HCT116 (cell line): ENCODE measurements at regions of chr17 and their contacts with region 1.

Region 1: GRCh38 chr17:74379495-74380085 is 12.3 kb downstream of the GPR142 start:
- DNase-seq: peak; percentile 69
- ATAC-seq: peak; percentile 92
- H3K4me3 ChIP-seq: peak overlapping the region; percentile 6 to 45; a peak in 3 of 4 replicates
- H3K27ac ChIP-seq: peak overlapping the region; percentile 43; the same call in 1 of the 2 replicates
- H3K4me1 ChIP-seq: peaks cover 19 to 26% of the 10 kb centered on the region in 2 experiments
- H3K27me3 ChIP-seq: peaks cover 13% of the 10 kb centered on the region; the same call in 1 of the 2 replicates
- CTCF ChIP-seq: peak; percentile 93 to 98 (median 98)
- POLR2A ChIP-seq: no peak
- RAD21 ChIP-seq: peak; percentile 100

Region 2: DNA sequence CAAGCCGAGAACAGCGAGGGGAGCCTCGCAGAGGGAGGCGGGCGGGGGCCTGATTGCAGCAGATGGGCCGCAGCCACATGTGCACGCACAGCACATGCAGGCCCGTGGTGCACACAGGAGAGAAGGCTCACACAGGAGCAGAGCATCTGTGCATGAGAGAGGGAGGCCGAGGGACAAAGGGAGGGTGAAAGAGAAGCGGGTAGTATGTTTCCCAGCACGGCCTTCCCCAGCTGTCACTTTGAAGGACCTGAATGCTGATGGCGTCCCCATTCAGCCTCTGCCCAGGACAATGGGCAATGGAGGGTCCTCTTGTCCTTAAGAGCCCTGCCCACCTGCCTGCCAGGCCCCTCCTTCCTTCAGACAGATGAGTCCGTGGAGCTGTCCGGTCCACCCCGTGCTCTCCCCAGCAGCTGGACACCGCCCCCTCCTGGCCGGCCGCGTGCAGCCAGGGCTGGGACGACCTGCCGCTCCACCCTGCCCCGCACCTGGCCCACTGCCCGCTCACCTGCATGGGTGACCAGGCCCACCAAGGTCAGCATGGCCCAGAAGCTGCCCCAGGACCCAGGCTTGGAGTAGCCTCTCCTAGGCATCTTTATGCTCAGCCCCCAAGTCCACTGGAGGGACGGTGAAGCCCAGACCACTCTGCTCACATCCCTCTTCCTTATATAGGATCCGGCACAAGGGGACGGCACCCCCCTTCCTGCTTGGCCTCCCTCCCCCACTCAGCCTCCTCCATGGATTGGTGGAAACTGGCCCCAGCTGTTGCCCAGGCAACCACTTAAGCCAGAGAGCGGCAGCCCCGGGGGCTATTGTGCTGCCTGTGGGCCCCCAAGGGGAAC is 18.1 kb before region 1 on chr17 and contains the start of gene BTBD17:
- CTCF ChIA-PET with region 1: interaction called, 32 read pairs
- POLR2A ChIA-PET with region 1: no interaction called
- RAD21 ChIA-PET with region 1: no interaction called
- intact Hi-C with region 1: no loop called
- DNase-seq: no peak
- ATAC-seq: peak; percentile 96
- H3K4me3 ChIP-seq: no peak within 1 kb of the TSS
- H3K27ac ChIP-seq: no peak within 1 kb of the TSS; the same call in 1 of the 2 replicates
- H3K4me1 ChIP-seq: peaks cover 0 to 8% of the 10 kb centered on the region in 2 experiments; a peak in 1 of 4 replicates
- H3K27me3 ChIP-seq: no peaks in the 10 kb centered on the region
- CTCF ChIP-seq: peak; percentile 86 to 98 (median 98)
- POLR2A ChIP-seq: no peak
- RAD21 ChIP-seq: peak; percentile 80
- total RNA-seq, gene BTBD17: not detected

Region 3: GRCh38 chr17:74368092-74369081 is 11.2 kb before region 1 on chr17:
- CTCF ChIA-PET with region 1: interaction called, 91 read pairs
- POLR2A ChIA-PET with region 1: interaction called, 3 read pairs
- RAD21 ChIA-PET with region 1: interaction called, 10 to 13 read pairs
- intact Hi-C with region 1: no loop called
- DNase-seq: peak; percentile 67
- ATAC-seq: peak; percentile 95
- H3K4me3 ChIP-seq: no peak overlapping the region
- H3K27ac ChIP-seq: no peak overlapping the region
- H3K4me1 ChIP-seq: peaks cover 2 to 13% of the 10 kb centered on the region in 2 experiments; a peak in 2 of 4 replicates
- H3K27me3 ChIP-seq: no peaks in the 10 kb centered on the region
- CTCF ChIP-seq: peak; percentile 96 to 100 (median 99)
- POLR2A ChIP-seq: no peak
- RAD21 ChIP-seq: peak; percentile 94

Region 4: DNA sequence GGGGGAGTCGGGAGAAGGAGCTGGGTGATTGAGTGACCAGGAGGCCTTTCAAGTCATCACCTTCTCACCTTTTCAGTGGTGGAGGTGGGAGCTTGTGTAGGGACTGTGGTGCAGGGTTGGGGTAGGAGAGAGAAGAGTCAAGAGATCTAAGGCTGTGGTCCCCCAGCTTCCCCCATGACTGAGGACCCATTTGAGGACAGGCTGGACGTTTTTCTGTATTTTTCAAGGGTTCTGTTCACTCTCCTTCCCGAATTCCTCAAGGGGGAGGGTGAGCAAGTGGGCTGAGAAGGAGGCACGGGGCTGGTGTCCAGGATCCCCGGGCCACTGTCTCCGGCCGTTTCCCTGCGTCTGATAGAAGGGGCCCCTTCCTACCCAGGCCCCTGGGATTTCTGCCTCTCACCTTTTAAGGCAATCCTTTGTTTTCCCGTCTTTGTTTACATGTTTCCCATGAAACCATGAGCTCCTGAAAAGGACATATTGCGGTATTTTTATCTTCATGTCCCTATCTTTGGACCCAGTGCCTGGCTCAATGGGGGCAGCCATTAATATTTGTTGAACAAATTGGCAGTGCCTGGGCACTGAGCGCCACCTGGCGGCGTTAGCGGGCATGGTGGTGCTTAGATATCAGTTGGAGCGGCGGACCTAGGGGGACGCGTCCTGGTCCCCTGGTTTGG is 77.7 kb after region 1 on chr17:
- CTCF ChIA-PET with region 1: interaction called, 114 read pairs
- POLR2A ChIA-PET with region 1: interaction called, 27 read pairs
- RAD21 ChIA-PET with region 1: interaction called, 32 to 61 read pairs
- intact Hi-C with region 1: loop called (anchors 1 kb)
- DNase-seq: peak; percentile 63
- ATAC-seq: peak; percentile 56
- H3K4me3 ChIP-seq: no peak overlapping the region
- H3K27ac ChIP-seq: no peak overlapping the region
- H3K4me1 ChIP-seq: peaks cover 22 to 29% of the 10 kb centered on the region in 2 experiments
- H3K27me3 ChIP-seq: no peaks in the 10 kb centered on the region
- CTCF ChIP-seq: peak; percentile 97 to 100 (median 99)
- POLR2A ChIP-seq: no peak
- RAD21 ChIP-seq: peak; percentile 100

Region 5: DNA sequence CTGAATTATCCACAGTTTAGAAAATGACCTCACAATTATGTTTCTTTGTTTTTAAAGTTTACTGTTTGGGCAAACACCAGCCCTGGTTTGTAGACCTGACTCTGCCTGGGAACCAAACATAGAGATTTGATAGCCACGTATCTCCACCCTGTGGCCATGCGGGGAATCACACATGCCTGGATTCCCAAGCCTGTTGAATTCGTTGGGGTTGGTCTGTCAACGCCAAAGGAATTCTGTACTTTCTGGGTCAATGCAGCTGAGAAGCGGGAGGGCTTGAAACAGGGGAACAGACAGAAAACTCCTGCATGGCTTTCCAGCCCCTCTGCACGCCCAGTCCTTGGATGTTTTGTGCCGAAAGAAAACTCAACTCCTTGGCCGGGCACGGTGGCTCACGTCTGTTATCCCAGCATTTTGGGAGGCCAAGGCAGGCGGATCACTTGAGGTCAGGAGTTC is 113.8 kb after region 1 on chr17:
- CTCF ChIA-PET with region 1: interaction called, 22 read pairs
- POLR2A ChIA-PET with region 1: no interaction called
- RAD21 ChIA-PET with region 1: interaction called in 1 of 2 experiments, 6 read pairs
- intact Hi-C with region 1: loop called (anchors 1 kb)
- DNase-seq: peak; percentile 73
- ATAC-seq: peak; percentile 98
- H3K4me3 ChIP-seq: no peak overlapping the region
- H3K27ac ChIP-seq: no peak overlapping the region
- H3K4me1 ChIP-seq: no peaks in the 10 kb centered on the region
- H3K27me3 ChIP-seq: no peaks in the 10 kb centered on the region
- CTCF ChIP-seq: peak; percentile 97 to 99 (median 97)
- POLR2A ChIP-seq: no peak
- RAD21 ChIP-seq: peak; percentile 97

Region 6: DNA sequence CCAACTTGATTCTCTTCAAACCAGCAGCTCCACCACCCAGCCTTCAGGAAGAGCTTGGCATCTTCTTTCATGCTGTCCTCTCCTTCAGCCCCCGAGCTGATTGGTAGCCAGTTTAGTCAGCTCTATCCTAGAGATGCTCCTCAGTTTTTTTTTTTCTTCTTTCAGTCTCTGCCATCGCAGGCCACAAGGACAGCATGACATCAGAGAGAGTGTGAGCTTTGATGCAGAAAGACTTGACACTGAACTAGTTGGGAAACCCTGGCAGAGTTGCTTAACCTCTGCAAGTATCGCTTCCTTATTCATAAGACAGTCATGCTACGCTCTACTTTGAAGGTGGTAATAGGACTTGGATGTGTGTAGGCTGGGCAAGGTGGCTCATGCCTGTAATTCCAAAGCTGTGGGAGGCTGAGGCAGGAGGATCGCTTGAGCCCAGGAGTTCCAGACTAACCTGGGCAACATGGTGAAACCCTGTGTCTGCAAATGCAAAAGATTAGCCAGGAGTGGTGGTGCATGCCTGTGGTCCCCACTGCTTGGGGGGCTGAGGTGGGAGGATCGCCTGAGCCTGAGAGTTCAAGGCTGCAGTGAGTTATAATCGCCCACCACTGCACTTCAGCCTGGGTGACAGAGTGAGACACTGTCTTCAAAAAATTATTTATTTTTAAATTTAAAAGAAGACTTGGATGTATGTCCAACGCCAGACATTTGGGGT is 149.1 kb after region 1 on chr17:
- CTCF ChIA-PET with region 1: interaction called, 43 read pairs
- POLR2A ChIA-PET with region 1: no interaction called
- RAD21 ChIA-PET with region 1: interaction called in 1 of 2 experiments, 3 read pairs
- intact Hi-C with region 1: loop called (anchors 1 kb)
- DNase-seq: no peak
- ATAC-seq: no peak
- H3K4me3 ChIP-seq: no peak overlapping the region
- H3K27ac ChIP-seq: no peak overlapping the region
- H3K4me1 ChIP-seq: no peaks in the 10 kb centered on the region
- H3K27me3 ChIP-seq: peaks cover 60% of the 10 kb centered on the region
- CTCF ChIP-seq: no peak
- POLR2A ChIP-seq: no peak
- RAD21 ChIP-seq: no peak

Region 7: GRCh38 chr17:74736513-74737298 is 357.1 kb after region 1 on chr17 and contains the start of gene RAB37:
- CTCF ChIA-PET with region 1: interaction called, 13 read pairs
- POLR2A ChIA-PET with region 1: no interaction called
- RAD21 ChIA-PET with region 1: interaction called in 1 of 2 experiments, 3 read pairs
- intact Hi-C with region 1: no loop called
- DNase-seq: peak; percentile 47
- ATAC-seq: peak; percentile 79
- H3K4me3 ChIP-seq: peak within 1 kb of the TSS; percentile 69 to 76
- H3K27ac ChIP-seq: peak within 1 kb of the TSS; percentile 68
- H3K4me1 ChIP-seq: peaks cover 20 to 27% of the 10 kb centered on the region in 2 experiments
- H3K27me3 ChIP-seq: no peaks in the 10 kb centered on the region
- CTCF ChIP-seq: peak; percentile 62 to 84 (median 72)
- POLR2A ChIP-seq: peak; percentile 25
- RAD21 ChIP-seq: peak; percentile 82
- total RNA-seq, gene RAB37: 8.2 TPM

Region 8: DNA sequence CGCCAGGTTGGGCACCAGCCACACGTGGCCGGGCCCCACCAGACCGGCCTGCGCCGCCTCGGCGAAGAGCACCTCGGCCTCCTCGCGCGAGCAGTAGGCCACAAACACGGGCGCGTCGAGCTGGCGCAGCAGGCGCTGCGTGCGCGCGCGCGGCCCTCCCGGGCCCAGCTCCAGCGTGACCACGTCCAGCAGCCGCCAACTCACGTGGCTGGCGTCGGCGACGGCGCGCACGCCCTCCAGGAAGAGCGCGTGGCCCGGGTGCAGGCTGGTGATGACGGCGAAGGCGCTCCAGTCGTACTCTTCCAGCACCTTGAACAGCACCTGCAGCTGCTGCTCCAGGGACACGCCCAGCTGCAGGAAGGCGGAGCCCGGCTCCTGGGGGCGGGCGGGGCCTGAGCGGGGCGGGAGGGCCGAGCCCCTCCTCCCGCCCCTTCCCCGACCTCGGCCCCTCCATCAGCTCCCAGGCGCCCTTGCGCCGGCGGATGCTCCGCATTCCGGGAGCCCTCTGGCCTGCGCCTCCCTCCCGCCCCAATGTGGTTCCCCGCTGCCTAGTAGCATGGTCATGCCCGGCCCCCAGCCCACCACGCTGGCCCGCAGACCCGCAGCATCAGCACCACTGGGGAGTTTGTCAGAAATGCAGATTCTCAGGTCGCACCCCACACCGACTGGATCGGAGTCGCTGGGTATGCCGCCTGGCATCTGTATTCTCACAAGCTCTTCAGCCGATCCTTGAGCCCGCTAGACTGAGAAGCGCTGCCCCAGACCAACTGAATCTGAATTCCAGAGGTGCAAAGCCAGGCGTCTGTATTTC is 472.9 kb after region 1 on chr17:
- CTCF ChIA-PET with region 1: no interaction called
- POLR2A ChIA-PET with region 1: no interaction called
- RAD21 ChIA-PET with region 1: no interaction called
- intact Hi-C with region 1: no loop called
- DNase-seq: peak; percentile 27
- ATAC-seq: peak; percentile 82
- H3K4me3 ChIP-seq: no peak overlapping the region
- H3K27ac ChIP-seq: no peak overlapping the region
- H3K4me1 ChIP-seq: peaks cover 0 to 12% of the 10 kb centered on the region in 2 experiments; a peak in 2 of 4 replicates
- H3K27me3 ChIP-seq: no peaks in the 10 kb centered on the region
- CTCF ChIP-seq: no peak
- POLR2A ChIP-seq: no peak
- RAD21 ChIP-seq: no peak